ENCODE measurements at regions of chr1 and their contacts with region 1.

Region 1: DNA sequence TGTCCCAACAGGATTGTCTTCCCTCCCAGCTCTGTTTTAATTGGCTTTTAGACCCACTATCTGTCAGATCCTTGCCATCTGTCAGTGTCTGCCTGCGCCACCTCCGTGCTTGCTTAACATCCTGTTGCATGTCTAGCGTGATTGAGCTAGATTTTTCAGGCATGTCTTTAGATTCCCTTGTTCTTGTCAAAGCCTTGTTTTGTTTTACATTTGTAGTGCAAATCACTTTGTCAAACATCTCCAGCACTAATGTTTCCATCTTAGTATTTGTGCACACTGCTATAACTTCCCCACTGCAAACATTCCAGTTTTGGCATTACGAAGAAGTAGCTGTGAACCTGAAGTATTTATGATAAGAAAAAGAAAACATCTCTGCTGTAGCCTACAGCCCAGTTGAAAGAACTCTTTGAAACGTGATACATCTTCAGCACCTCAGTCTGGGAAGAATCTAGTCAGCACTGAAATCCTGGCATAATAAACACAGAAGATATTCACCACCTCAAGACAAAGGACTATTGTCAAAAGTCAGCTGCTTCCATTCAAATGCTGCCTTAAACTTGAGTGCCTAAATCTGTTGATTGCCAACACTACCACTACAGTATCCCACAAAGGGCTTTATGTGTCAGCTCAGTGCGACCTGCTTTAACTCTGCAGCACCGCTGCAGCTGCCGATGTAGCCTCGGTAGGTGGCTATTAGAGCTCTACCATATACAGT is 105.0 kb downstream of the FNBP1L start:
- DNase-seq: peak; percentile 53
- ATAC-seq: peak; percentile 72
- H3K4me3 ChIP-seq: no peak overlapping the region
- H3K27ac ChIP-seq: no peak overlapping the region
- H3K4me1 ChIP-seq: peaks cover 5% of the 10 kb centered on the region
- H3K27me3 ChIP-seq: no peaks in the 10 kb centered on the region
- CTCF ChIP-seq: no peak
- POLR2A ChIP-seq: no peak
- RAD21 ChIP-seq: no peak

Region 2: DNA sequence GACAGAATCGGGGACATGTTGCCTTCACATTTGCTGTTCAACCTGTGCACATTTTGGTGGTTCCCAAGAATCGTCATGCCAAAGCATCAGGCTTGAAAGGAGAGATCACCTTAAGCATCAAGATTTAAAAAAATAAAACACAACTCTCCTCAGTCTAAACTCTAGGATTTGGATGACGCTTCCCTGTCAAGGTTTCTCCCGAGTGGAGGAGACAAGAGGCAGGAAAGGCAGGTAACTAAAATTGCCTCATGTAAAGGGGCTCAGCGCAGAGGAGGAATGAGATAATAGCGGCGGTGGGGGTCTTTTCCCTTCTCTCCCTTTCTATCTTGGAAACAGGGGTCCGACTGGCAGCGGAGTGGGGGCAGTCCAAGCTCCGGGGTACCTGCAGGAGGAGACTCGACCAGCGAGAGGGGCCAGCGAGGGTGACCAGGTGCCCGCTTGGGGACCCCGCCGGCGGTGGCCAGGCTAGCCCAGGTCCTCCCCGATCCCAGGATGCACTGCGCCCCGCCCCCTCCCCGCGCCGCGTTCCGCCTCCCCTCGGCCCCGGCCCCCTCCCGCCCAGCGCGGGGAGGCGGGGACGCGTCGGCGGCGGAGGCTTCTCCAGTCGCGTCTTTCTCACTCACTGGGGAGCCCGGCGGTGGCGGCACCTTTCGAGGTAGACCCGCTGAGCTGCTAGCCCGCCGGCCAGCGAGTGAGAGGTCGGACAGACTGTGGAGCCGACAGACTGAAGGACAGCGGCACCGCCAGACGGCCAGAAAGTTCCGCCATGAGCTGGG is 105.2 kb before region 1 on chr1 and contains the start of gene FNBP1L:
- CTCF ChIA-PET with region 1: no interaction called
- POLR2A ChIA-PET with region 1: no interaction called
- dilution Hi-C with region 1: no loop called
- in situ Hi-C with region 1: loop called (anchors 25 kb)
- intact Hi-C with region 1: loop called (anchors 5 kb)
- DNase-seq: peak; percentile 52
- ATAC-seq: peak; percentile 93
- H3K4me3 ChIP-seq: peak within 1 kb of the TSS; percentile 99
- H3K27ac ChIP-seq: peak within 1 kb of the TSS; percentile 64
- H3K4me1 ChIP-seq: no peaks in the 10 kb centered on the region
- H3K27me3 ChIP-seq: no peaks in the 10 kb centered on the region
- CTCF ChIP-seq: no peak
- POLR2A ChIP-seq: no peak
- RAD21 ChIP-seq: no peak
- total RNA-seq, gene FNBP1L: 15.2 and 24.4 TPM in 2 replicates

Region 3: DNA sequence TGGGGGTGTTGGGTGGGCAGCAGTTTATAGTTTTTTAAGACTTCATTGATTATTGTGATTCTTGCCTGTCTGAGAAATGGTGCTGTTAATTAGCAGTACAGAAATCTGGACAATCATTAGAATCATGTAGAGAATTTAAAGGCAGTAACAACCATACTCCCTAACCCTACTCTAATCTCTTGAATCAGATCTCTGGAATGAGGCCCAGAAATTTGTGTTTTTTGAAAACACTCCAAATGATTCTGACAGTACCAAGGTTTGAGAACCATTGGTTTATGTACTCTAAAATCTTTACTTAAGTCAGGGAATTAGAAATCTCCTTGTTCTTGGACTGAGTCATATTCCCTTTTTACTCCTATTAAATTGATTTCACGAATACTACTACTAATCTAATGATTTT is 81.0 kb before region 1 on chr1:
- CTCF ChIA-PET with region 1: no interaction called
- POLR2A ChIA-PET with region 1: no interaction called
- dilution Hi-C with region 1: no loop called
- in situ Hi-C with region 1: loop called (anchors 25 kb)
- intact Hi-C with region 1: no loop called
- DNase-seq: peak; percentile 86
- ATAC-seq: peak; percentile 89
- H3K4me3 ChIP-seq: no peak overlapping the region
- H3K27ac ChIP-seq: no peak overlapping the region
- H3K4me1 ChIP-seq: no peaks in the 10 kb centered on the region
- H3K27me3 ChIP-seq: no peaks in the 10 kb centered on the region
- CTCF ChIP-seq: no peak
- POLR2A ChIP-seq: no peak
- RAD21 ChIP-seq: no peak

Region 4: GRCh38 chr1:93489756-93490155 is 63.1 kb before region 1 on chr1:
- CTCF ChIA-PET with region 1: no interaction called
- POLR2A ChIA-PET with region 1: no interaction called
- dilution Hi-C with region 1: no loop called
- in situ Hi-C with region 1: no loop called
- intact Hi-C with region 1: loop called (anchors 10 kb)
- DNase-seq: peak; percentile 7
- ATAC-seq: no peak
- H3K4me3 ChIP-seq: no peak overlapping the region
- H3K27ac ChIP-seq: no peak overlapping the region
- H3K4me1 ChIP-seq: no peaks in the 10 kb centered on the region; the same call in 1 of the 2 replicates
- H3K27me3 ChIP-seq: no peaks in the 10 kb centered on the region
- CTCF ChIP-seq: no peak
- POLR2A ChIP-seq: no peak
- RAD21 ChIP-seq: no peak